CD4-positive, alpha-beta memory T cell (primary cell): ENCODE measurements at regions of chr4 and their contacts with region 1.

Region 1: GRCh38 chr4:40247350-40247749 is 50.5 kb downstream of the RHOH start:
- DNase-seq: peak; percentile 66 to 82 (median 69)
- H3K4me3 ChIP-seq: no peak overlapping the region
- H3K4me3 Mint-ChIP-seq: peak overlapping the region in 7 of 8 donors; percentile 19 to 75 (median 58)
- H3K27ac ChIP-seq: peak overlapping the region; percentile 68
- H3K27ac Mint-ChIP-seq: peak overlapping the region; percentile 80 to 100 (median 96)
- H3K4me1 ChIP-seq: peaks cover 88% of the 10 kb centered on the region
- H3K4me1 Mint-ChIP-seq: peaks cover 65 to 92% (median 74%) of the 10 kb centered on the region in 4 donors
- H3K27me3 ChIP-seq: no peaks in the 10 kb centered on the region
- H3K27me3 Mint-ChIP-seq: no peaks in the 10 kb centered on the region

Region 2: DNA sequence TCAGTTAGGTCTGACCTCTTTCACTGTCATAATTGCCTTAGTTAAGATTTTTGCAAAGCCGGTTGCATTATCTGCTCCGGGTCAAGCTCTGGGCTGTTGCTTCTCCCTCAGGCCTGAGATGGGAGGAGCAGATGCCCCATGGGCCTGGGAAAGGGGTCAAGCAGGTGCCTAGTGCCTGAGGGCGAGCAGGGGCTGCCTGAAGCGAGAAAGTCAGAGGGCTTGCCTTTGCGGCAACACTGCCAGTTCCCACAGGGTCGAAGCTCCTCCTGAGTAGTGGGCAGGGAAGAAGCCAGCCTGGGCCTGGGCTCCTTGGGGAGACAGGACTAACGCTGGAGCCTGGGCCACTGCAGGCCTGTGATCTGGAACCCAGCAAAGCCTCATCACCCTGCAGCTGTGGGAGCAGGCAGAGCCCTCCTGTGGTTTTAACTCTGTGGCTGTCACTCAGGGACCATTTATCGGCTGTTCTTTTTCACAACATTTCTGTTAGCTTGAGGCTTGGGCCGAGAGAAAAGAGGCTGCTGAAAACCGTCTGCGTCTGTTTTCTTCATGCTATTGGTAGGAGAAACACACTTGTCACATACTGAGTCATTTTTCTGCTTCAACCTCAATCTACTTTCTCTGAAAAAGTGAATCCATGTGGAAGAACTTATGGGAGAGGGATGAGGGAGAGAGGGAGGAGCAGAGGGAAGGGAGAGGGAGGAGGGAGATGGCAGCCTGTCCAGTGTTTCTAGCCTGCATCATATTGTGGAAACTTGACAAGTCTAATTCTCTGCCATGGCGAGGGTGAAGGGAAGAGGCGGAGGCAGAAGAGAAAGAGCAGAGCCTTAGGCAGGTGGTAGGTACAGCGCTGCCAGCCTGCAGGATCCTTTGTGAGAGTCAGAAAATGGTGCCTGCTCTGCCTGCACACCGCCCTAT is 17.9 kb after region 1 on chr4:
- CTCF ChIA-PET with region 1: interaction called, 3 read pairs
- POLR2A ChIA-PET with region 1: interaction called, 7 read pairs
- intact Hi-C with region 1: loop called (anchors 1 kb)
- DNase-seq: peak in 3 of 5 donors; percentile 51 to 63 (median 53)
- H3K4me3 ChIP-seq: no peak overlapping the region
- H3K4me3 Mint-ChIP-seq: peak overlapping the region; percentile 42 to 78 (median 70)
- H3K27ac ChIP-seq: peak overlapping the region; percentile 19
- H3K27ac Mint-ChIP-seq: peak overlapping the region; percentile 66 to 93 (median 85)
- H3K4me1 ChIP-seq: peaks cover 26% of the 10 kb centered on the region
- H3K4me1 Mint-ChIP-seq: peaks cover 26 to 54% (median 39%) of the 10 kb centered on the region in 4 donors
- H3K27me3 ChIP-seq: no peaks in the 10 kb centered on the region
- H3K27me3 Mint-ChIP-seq: no peaks in the 10 kb centered on the region

Region 3: DNA sequence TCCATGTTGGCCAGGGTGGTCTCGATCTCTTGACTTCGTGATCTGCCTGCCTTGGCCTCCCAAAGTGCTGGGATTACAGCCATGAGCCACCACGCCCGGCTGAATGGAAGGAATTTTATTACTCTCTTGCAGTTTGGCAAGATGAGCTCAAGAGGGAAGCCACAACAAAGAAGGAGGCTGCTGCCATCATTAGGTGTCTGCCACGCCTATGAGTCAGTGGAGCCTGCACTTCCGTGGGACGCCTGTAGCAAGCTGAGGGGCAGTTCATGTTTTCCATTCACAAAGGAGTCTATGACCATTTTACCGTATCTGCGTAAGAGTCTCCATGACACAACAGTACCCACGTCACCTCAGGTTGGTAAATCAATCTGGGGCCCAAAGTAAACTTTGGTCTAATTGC is 36.6 kb after region 1 on chr4:
- CTCF ChIA-PET with region 1: interaction called, 5 read pairs
- POLR2A ChIA-PET with region 1: interaction called, 5 read pairs
- intact Hi-C with region 1: loop called (anchors 5 kb)
- DNase-seq: peak; percentile 71 to 97 (median 86)
- H3K4me3 ChIP-seq: no peak overlapping the region
- H3K4me3 Mint-ChIP-seq: peak overlapping the region in 7 of 8 donors; percentile 70 to 86 (median 79)
- H3K27ac ChIP-seq: peak overlapping the region; percentile 49
- H3K27ac Mint-ChIP-seq: peak overlapping the region; percentile 92 to 98 (median 96)
- H3K4me1 ChIP-seq: peaks cover 39% of the 10 kb centered on the region
- H3K4me1 Mint-ChIP-seq: peaks cover 34 to 73% (median 55%) of the 10 kb centered on the region in 4 donors
- H3K27me3 ChIP-seq: no peaks in the 10 kb centered on the region
- H3K27me3 Mint-ChIP-seq: peaks cover 0 to 2% of the 10 kb centered on the region in 2 donors